Right lobe of liver (tissue), 6 donors: ENCODE measurements at regions of chr17 and their contacts with region 1.

Region 1: GRCh38 chr17:50564916-50565315 is 4.4 kb downstream of the CACNA1G start:
- DNase-seq: no peak
- ATAC-seq: no peak
- H3K4me3 ChIP-seq: no peak overlapping the region
- H3K27ac ChIP-seq: no peak overlapping the region
- H3K4me1 ChIP-seq: peaks cover 0 to 16% (median 3%) of the 10 kb centered on the region in 4 donors
- H3K27me3 ChIP-seq: peaks cover 4 to 18% of the 10 kb centered on the region in 2 donors
- CTCF ChIP-seq: no peak
- POLR2A ChIP-seq: no peak

Region 2: DNA sequence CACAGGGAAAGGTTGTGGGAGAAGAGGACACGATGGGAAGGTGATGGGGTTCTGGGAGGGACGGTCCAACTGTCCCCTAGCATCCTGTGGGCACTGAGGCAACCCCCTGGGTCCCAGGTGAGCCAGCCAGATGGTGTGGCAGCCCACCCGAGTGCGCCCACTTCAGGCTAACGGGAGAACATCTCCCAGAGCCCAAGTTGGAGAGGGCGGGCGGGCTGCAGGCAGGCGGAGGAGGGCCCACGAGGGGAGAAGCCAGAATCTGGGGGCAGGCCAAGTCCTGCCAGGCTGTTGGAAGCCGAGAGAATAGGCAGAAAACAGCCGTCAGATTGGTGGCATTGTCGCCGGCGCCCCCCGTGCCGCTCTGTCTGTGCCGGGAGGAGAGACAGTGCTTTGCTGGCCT is 55.9 kb after region 1 on chr17:
- intact Hi-C with region 1: loop called in 1 of 2 experiments (anchors 5 kb)
- DNase-seq: no peak
- ATAC-seq: no peak
- H3K4me3 ChIP-seq: no peak overlapping the region
- H3K27ac ChIP-seq: no peak overlapping the region
- H3K4me1 ChIP-seq: no peaks in the 10 kb centered on the region
- H3K27me3 ChIP-seq: no peaks in the 10 kb centered on the region
- CTCF ChIP-seq: no peak
- POLR2A ChIP-seq: no peak